IMR-90 (cell line): ENCODE measurements at regions of chr20 and their contacts with region 1.

Region 1: GRCh38 chr20:45088247-45088646 is 12.7 kb downstream of the KCNS1 start:
- DNase-seq: peak; percentile 96
- ATAC-seq: peak; percentile 94
- H3K4me3 ChIP-seq: no peak overlapping the region
- H3K27ac ChIP-seq: peak overlapping the region; percentile 90
- H3K4me1 ChIP-seq: peaks cover 11% of the 10 kb centered on the region
- H3K27me3 ChIP-seq: no peaks in the 10 kb centered on the region
- CTCF ChIP-seq: no peak
- POLR2A ChIP-seq: no peak
- RAD21 ChIP-seq: no peak

Region 2: DNA sequence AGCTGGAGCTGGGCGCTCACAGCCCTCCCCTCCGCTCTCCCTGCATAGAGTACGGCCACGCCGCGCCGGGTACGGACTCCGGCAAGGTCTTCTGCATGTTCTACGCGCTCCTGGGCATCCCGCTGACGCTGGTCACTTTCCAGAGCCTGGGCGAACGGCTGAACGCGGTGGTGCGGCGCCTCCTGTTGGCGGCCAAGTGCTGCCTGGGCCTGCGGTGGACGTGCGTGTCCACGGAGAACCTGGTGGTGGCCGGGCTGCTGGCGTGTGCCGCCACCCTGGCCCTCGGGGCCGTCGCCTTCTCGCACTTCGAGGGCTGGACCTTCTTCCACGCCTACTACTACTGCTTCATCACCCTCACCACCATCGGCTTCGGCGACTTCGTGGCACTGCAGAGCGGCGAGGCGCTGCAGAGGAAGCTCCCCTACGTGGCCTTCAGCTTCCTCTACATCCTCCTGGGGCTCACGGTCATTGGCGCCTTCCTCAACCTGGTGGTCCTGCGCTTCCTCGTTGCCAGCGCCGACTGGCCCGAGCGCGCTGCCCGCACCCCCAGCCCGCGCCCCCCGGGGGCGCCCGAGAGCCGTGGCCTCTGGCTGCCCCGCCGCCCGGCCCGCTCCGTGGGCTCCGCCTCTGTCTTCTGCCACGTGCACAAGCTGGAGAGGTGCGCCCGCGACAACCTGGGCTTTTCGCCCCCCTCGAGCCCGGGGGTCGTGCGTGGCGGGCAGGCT is 338.0 kb before region 1 on chr20:
- CTCF ChIA-PET with region 1: no interaction called
- POLR2A ChIA-PET with region 1: no interaction called
- dilution Hi-C with region 1: no loop called
- in situ Hi-C with region 1: no loop called
- intact Hi-C with region 1: no loop called
- DNase-seq: no peak
- ATAC-seq: peak; percentile 33; the same call in 1 of the 2 replicates
- H3K4me3 ChIP-seq: no peak overlapping the region
- H3K27ac ChIP-seq: no peak overlapping the region
- H3K4me1 ChIP-seq: peaks cover 1% of the 10 kb centered on the region; the same call in 1 of the 2 replicates
- H3K27me3 ChIP-seq: peaks cover 62% of the 10 kb centered on the region
- CTCF ChIP-seq: peak; percentile 42
- POLR2A ChIP-seq: no peak
- RAD21 ChIP-seq: peak; percentile 27

Region 3: GRCh38 chr20:45052698-45053429 is 35.4 kb before region 1 on chr20:
- CTCF ChIA-PET with region 1: no interaction called
- POLR2A ChIA-PET with region 1: no interaction called
- dilution Hi-C with region 1: no loop called
- in situ Hi-C with region 1: loop called (anchors 5 kb)
- intact Hi-C with region 1: loop called (anchors 5 kb)
- DNase-seq: peak; percentile 81
- ATAC-seq: peak; percentile 92
- H3K4me3 ChIP-seq: no peak overlapping the region
- H3K27ac ChIP-seq: peak overlapping the region; percentile 44; the same call in 1 of the 2 replicates
- H3K4me1 ChIP-seq: peaks cover 14% of the 10 kb centered on the region
- H3K27me3 ChIP-seq: no peaks in the 10 kb centered on the region
- CTCF ChIP-seq: no peak
- POLR2A ChIP-seq: no peak
- RAD21 ChIP-seq: no peak